ENCODE measurements at regions of chr6 and their contacts with region 1.

Region 1: GRCh38 chr6:144013486-144013909 is 5.4 kb upstream of the PLAGL1 start:
- DNase-seq: peak in 1 of 2 experiments; percentile 77
- H3K4me3 ChIP-seq: no peak overlapping the region
- H3K27ac ChIP-seq: no peak overlapping the region
- H3K4me1 ChIP-seq: 0 out of 7 replicates have a peak, but pooled peaks cover 0 to 2% (median 0%) of the 10 kb centered on the region in 4 experiments
- H3K27me3 ChIP-seq: peaks cover 0 to 13% (median 10%) of the 10 kb centered on the region in 4 experiments; a peak in 6 of 7 replicates
- CTCF ChIP-seq: peak; percentile 58 to 97 (median 90)
- EP300 ChIP-seq: no peak
- POLR2A ChIP-seq: no peak
- RAD21 ChIP-seq: peak; percentile 97 to 98

Region 2: GRCh38 chr6:143575440-143575839 is 438.1 kb before region 1 on chr6:
- CTCF ChIA-PET with region 1: interaction called, 37 read pairs
- POLR2A ChIA-PET with region 1: no interaction called
- DNase-seq: no peak
- H3K4me3 ChIP-seq: no peak overlapping the region
- H3K27ac ChIP-seq: no peak overlapping the region
- H3K4me1 ChIP-seq: peaks cover 0 to 2% (median 0%) of the 10 kb centered on the region in 4 experiments; a peak in 1 of 7 replicates
- H3K27me3 ChIP-seq: no peaks in the 10 kb centered on the region
- CTCF ChIP-seq: peak in 2 of 3 experiments; percentile 82 to 85; a peak in 3 of 4 replicates
- EP300 ChIP-seq: no peak
- POLR2A ChIP-seq: no peak
- RAD21 ChIP-seq: peak; percentile 94 to 97

Region 3: DNA sequence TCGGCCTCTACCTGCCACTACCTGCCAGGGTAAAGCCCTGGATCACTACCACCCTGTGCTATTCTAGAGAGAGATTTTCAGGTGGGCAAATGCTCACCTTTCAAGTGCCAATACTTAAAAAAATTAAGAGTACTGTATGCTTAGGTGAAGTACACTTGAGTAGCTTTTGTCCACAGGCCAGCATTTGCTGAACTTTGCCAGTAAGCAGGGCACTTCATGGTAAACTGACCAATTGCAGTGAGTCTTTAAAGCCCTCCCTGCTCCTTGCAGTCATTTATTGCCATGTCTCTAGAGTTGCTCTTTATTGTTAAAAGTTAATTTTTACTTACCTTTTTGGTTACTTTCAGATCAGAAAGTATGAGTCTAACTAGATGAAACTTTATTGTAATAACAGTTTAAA is 64.0 kb before region 1 on chr6:
- CTCF ChIA-PET with region 1: interaction called, 366 read pairs
- POLR2A ChIA-PET with region 1: no interaction called
- DNase-seq: no peak
- H3K4me3 ChIP-seq: no peak overlapping the region
- H3K27ac ChIP-seq: no peak overlapping the region
- H3K4me1 ChIP-seq: peaks cover 0 to 4% (median 1%) of the 10 kb centered on the region in 4 experiments; a peak in 4 of 7 replicates
- H3K27me3 ChIP-seq: peaks cover 0 to 3% (median under 1%) of the 10 kb centered on the region in 4 experiments; a peak in 2 of 7 replicates
- CTCF ChIP-seq: no peak
- EP300 ChIP-seq: no peak
- POLR2A ChIP-seq: no peak
- RAD21 ChIP-seq: no peak

Region 4: DNA sequence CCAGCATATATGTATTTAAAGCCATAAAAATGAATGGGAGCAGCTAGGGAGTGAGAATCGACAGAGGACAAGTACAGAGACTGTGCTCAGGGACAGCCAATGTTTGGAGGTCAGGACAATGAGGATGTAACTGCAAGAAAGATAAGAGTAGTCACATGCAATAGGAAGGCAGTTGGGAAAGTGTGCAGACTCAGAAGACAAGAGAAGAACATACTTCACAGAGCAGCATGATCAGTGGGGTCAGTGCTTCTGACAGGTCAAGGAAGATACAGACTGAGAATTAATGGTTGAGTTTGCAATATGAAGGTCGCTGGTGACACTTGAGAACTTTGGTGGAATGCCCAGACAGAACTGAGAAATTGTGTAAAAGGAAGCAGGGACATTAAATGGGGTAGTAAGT is 30.5 kb before region 1 on chr6:
- CTCF ChIA-PET with region 1: interaction called, 16 read pairs
- POLR2A ChIA-PET with region 1: no interaction called
- DNase-seq: no peak
- H3K4me3 ChIP-seq: no peak overlapping the region
- H3K27ac ChIP-seq: no peak overlapping the region
- H3K4me1 ChIP-seq: no peaks in the 10 kb centered on the region
- H3K27me3 ChIP-seq: peaks cover 2 to 11% (median 6%) of the 10 kb centered on the region in 4 experiments; a peak in 5 of 7 replicates
- CTCF ChIP-seq: no peak
- EP300 ChIP-seq: no peak
- POLR2A ChIP-seq: no peak
- RAD21 ChIP-seq: no peak

Region 5: GRCh38 chr6:144087789-144088426 is 74.4 kb after region 1 on chr6:
- CTCF ChIA-PET with region 1: interaction called, 10 read pairs
- POLR2A ChIA-PET with region 1: no interaction called
- DNase-seq: no peak
- H3K4me3 ChIP-seq: no peak overlapping the region
- H3K27ac ChIP-seq: no peak overlapping the region
- H3K4me1 ChIP-seq: no peaks in the 10 kb centered on the region
- H3K27me3 ChIP-seq: no peaks in the 10 kb centered on the region
- CTCF ChIP-seq: peak in 2 of 3 experiments; percentile 14 to 23; a peak in 2 of 4 replicates
- EP300 ChIP-seq: no peak
- POLR2A ChIP-seq: no peak
- RAD21 ChIP-seq: peak; percentile 26 to 46

Region 6: GRCh38 chr6:144104898-144105487 is 91.5 kb after region 1 on chr6:
- CTCF ChIA-PET with region 1: no interaction called
- POLR2A ChIA-PET with region 1: no interaction called
- DNase-seq: no peak
- H3K4me3 ChIP-seq: no peak overlapping the region
- H3K27ac ChIP-seq: no peak overlapping the region
- H3K4me1 ChIP-seq: no peaks in the 10 kb centered on the region
- H3K27me3 ChIP-seq: no peaks in the 10 kb centered on the region
- CTCF ChIP-seq: peak in 2 of 3 experiments; percentile 46 to 62; a peak in 2 of 4 replicates
- EP300 ChIP-seq: no peak
- POLR2A ChIP-seq: no peak
- RAD21 ChIP-seq: peak; percentile 87 to 89